Left cardiac atrium (tissue), 4 donors: ENCODE measurements at regions of chr19 and their contacts with region 1.

Region 1: DNA sequence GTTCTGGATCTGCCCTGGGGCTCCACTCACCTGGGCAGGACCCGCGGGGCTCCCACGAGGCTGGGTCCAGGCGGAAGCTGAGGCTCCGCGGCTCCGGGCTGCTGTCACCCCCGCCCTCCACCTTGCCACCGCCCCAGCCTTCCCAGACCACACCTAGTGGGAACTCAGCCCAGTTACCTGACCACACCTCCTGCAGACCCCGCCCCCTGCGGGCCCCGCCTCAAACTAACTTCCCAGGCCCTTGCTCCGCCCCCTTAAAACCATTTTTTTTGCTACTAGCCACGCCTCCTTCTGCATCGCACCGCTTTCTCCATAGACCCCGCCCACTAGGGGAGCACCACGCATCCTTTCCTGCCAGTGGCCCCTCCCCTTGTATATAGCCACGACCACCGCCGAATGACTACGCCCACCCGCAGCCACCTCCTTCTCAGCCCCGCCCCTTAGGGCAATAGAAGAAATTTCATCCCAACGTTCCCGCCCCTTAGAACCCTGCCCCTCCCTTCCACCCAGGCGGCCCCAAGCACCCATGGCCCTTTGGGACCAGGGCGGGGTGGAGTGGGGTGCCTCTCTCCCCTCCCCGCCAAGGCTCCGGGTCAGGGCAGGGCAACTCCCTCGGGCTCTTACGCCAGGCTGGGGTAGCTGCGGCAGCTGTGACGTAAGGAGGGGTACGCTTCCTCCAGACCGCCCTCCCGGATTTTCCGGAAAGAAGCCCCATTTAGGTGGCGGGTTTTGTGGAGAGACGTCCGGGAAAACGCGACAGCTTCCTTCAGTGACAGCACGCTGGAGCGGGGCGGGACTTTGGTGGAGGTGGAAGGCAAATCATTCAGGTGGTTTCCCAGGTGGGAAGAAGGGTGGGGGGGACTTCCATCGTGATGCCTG is at the start of gene SH2D3A:
- DNase-seq: peak; percentile 68
- ATAC-seq: peak; percentile 86 to 87
- total RNA-seq, gene SH2D3A: 0.47 to 0.65 TPM

Region 2: GRCh38 chr19:6273701-6274601 is 493.6 kb before region 1 on chr19:
- intact Hi-C with region 1: no loop called
- DNase-seq: peak; percentile 92
- ATAC-seq: peak; percentile 71 to 78

Region 3: GRCh38 chr19:6632002-6632621 is 135.5 kb before region 1 on chr19:
- intact Hi-C with region 1: loop called in 1 of 2 experiments (anchors 10 kb)
- DNase-seq: peak; percentile 58
- ATAC-seq: peak; percentile 44 to 66

Region 4: GRCh38 chr19:7629347-7630054 is 861.9 kb after region 1 on chr19 and contains the starts of genes PET100 and XAB2:
- intact Hi-C with region 1: no loop called
- DNase-seq: peak; percentile 97
- ATAC-seq: peak; percentile 98 to 99
- total RNA-seq, gene PET100: 150 to 152 TPM
- total RNA-seq, gene XAB2: 18.1 to 24.1 TPM